CD8-positive, alpha-beta T cell (primary cell): ENCODE measurements at regions of chr12 and their contacts with region 1.

Region 1: DNA sequence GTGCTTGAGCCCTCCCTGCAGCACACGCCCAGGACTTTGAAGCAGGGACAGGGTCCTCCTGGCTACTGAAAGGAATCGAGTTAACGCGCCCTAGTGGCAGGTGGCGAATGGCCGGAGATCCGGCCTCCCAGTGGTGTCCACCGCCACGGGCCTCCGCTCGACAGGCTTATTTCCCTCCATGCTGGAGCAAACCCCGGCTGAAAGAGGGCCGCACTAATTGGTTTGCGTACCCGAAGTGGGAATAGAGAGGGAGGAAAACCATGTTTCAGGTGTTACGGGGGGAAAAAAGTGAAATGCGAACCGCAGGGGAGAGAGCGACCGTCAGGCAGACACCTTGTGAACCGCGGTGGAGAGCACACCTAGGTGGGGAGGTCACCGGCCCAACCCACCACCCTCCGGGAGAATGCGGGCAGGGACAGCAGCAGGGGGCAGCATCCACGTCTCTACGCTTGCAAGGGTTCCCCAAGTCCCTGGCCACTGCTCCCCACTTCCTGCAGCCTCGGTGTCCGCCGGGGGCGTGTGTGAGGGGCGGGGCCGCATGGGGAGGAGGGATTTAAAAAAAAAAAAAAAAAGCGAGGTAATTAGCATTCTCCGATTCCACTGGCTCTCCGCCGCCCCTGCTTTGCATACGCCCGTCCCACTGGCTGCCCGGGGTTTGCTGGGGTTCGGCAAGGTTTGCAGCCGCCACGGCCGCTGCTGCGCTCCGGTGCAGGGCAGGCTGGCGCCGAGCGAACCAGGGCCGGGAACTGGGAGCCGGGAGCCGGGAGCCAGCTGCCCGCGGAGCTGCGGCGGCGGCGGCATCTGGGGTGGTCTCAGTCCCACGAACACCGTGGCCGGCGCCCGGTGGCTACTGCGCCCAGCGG is 224.6 kb upstream of the CRY1 start:
- DNase-seq: peak; percentile 69 to 93 (median 86)
- ATAC-seq: peak; percentile 53
- H3K4me3 ChIP-seq: peak overlapping the region; percentile 69 to 74
- H3K4me3 Mint-ChIP-seq: peak overlapping the region; percentile 87
- H3K27ac ChIP-seq: peak overlapping the region; percentile 23 to 81
- H3K27ac Mint-ChIP-seq: peak overlapping the region; percentile 49
- H3K4me1 ChIP-seq: peaks cover 23% of the 10 kb centered on the region
- H3K4me1 Mint-ChIP-seq: peaks cover 36% of the 10 kb centered on the region
- H3K27me3 ChIP-seq: no peaks in the 10 kb centered on the region
- H3K27me3 Mint-ChIP-seq: no peaks in the 10 kb centered on the region
- CTCF ChIP-seq: peak; percentile 48

Region 2: DNA sequence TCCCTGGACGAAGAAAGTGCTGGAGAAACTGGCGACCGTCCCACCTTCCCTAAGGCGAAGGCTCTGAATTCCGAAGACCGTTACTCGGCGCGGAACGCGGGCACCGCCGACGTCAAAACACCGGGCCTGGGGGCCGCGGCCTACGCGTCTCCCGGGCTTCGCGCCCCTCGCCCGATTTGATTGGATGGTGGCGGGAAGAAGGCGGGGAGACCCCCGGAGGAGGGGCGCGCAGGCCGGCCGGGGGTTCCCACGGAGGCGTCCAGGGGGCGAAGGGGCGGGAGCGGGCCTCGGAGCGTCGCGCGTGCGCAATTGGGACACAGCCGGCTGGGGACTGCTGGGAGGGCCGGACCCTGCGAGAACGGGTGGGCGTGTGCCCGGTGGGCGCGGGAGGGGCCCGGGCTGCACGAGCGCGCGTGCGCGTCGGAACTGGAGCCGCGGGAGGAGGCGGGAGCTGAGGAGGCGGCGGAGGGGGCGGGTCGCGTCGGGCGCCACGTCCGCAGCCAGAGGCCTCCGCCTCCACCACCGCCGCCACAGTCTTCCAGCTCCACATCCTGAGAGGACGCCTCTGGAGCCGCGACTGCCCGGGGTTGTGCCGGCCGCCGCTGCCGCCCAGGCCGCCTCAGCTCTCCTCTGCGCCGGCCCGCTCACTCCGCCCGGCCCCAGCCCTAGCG is 362.5 kb before region 1 on chr12 and contains the start of gene TMEM263:
- CTCF ChIA-PET with region 1: no interaction called
- POLR2A ChIA-PET with region 1: interaction called, 6 read pairs
- intact Hi-C with region 1: loop called in 1 of 2 experiments (anchors 5 kb)
- DNase-seq: peak; percentile 83 to 98 (median 93)
- ATAC-seq: peak; percentile 81
- H3K4me3 ChIP-seq: peak within 1 kb of the TSS; percentile 87 to 93
- H3K4me3 Mint-ChIP-seq: peak within 1 kb of the TSS; percentile 97
- H3K27ac ChIP-seq: peak within 1 kb of the TSS; percentile 76 to 90
- H3K27ac Mint-ChIP-seq: peak within 1 kb of the TSS; percentile 96
- H3K4me1 ChIP-seq: peaks cover 18% of the 10 kb centered on the region
- H3K4me1 Mint-ChIP-seq: peaks cover 41% of the 10 kb centered on the region
- H3K27me3 ChIP-seq: no peaks in the 10 kb centered on the region
- H3K27me3 Mint-ChIP-seq: no peaks in the 10 kb centered on the region
- CTCF ChIP-seq: no peak
- total RNA-seq, gene TMEM263: 34.3 to 35.3 TPM

Region 3: DNA sequence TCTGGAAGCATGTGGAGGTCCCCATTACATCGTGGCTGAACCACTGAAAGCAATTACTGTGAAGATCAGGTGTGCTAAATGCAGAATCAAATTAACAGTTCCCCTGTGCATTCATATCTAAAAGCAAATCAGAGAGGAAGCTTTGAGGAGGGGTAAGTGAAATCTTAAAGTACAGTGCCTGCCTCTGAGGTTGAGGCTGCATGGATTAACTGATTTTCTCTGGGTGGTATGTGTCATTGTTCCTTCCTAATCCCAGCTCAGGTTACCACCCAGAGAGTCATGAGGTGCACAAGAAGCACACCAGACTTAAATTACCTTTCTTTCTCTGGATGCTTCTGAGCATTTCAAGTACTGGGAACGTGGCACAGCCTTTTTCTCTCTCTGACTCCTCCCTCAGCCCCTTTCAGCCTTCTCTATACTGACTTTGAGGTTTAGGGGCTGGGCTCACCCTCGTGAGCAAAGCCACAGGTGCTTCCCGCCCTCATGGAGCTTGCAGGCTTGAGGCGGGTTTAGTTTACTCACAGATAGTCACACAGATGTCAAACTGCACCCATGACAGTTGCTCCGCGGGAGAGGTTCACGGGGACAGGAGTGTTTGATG is 12.9 kb after region 1 on chr12:
- CTCF ChIA-PET with region 1: interaction called, 3 read pairs
- POLR2A ChIA-PET with region 1: interaction called, 10 read pairs
- intact Hi-C with region 1: no loop called
- DNase-seq: peak in 3 of 9 experiments; percentile 21 to 51 (median 27)
- ATAC-seq: peak; percentile 41
- H3K4me3 ChIP-seq: no peak overlapping the region
- H3K4me3 Mint-ChIP-seq: no peak overlapping the region
- H3K27ac ChIP-seq: no peak overlapping the region
- H3K27ac Mint-ChIP-seq: peak overlapping the region; percentile 60
- H3K4me1 ChIP-seq: peaks cover 30% of the 10 kb centered on the region
- H3K4me1 Mint-ChIP-seq: peaks cover 86% of the 10 kb centered on the region
- H3K27me3 ChIP-seq: no peaks in the 10 kb centered on the region
- H3K27me3 Mint-ChIP-seq: no peaks in the 10 kb centered on the region
- CTCF ChIP-seq: no peak

Region 4: GRCh38 chr12:107372229-107372658 is 54.3 kb after region 1 on chr12:
- CTCF ChIA-PET with region 1: interaction called, 6 read pairs
- POLR2A ChIA-PET with region 1: interaction called, 76 read pairs
- intact Hi-C with region 1: loop called (anchors 1 to 2 kb)
- DNase-seq: peak in 8 of 9 experiments; percentile 7 to 84 (median 41)
- ATAC-seq: peak; percentile 66
- H3K4me3 ChIP-seq: peak overlapping the region in 1 of 2 experiments; percentile 7
- H3K4me3 Mint-ChIP-seq: peak overlapping the region; percentile 72
- H3K27ac ChIP-seq: peak overlapping the region; percentile 43 to 62
- H3K27ac Mint-ChIP-seq: peak overlapping the region; percentile 89
- H3K4me1 ChIP-seq: peaks cover 74% of the 10 kb centered on the region
- H3K4me1 Mint-ChIP-seq: peaks cover 83% of the 10 kb centered on the region
- H3K27me3 ChIP-seq: no peaks in the 10 kb centered on the region
- H3K27me3 Mint-ChIP-seq: no peaks in the 10 kb centered on the region
- CTCF ChIP-seq: no peak

Region 5: DNA sequence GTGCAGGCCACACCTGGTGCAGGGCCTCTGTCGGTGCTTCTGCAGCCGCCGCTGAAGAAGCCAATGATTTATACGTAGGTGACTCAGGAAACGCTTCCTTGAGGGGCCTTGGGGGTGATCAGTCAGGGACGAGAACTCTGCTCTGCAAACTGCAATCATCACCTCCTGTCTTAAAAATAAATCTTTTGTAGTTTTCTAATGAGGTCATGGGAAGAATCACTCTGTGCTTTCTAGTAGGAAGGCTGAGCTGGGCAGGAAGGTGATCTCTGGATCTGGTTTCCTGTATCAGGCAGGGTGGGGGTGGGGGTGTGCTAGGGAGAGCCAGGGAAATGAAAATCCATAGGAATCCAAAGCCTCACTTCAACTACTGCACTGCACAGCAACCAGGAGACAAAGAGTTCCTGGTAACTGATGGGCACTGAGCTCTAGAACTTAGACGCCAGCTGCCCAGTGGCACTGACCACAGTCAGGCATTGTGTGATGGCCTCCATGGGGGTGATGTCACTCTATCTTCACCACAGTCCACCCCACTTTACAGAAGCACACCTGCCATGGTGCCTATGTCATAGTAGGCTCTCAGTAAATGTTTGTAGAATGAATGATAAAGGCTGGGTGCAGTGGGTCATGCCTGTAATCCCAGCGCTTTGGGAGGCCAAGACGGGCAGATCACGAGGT is 75.2 kb after region 1 on chr12:
- CTCF ChIA-PET with region 1: interaction called, 4 read pairs
- POLR2A ChIA-PET with region 1: interaction called, 18 read pairs
- intact Hi-C with region 1: no loop called
- DNase-seq: peak in 3 of 9 experiments; percentile 39 to 51 (median 50)
- ATAC-seq: peak; percentile 82
- H3K4me3 ChIP-seq: no peak overlapping the region
- H3K4me3 Mint-ChIP-seq: peak overlapping the region; percentile 62
- H3K27ac ChIP-seq: no peak overlapping the region
- H3K27ac Mint-ChIP-seq: peak overlapping the region; percentile 83
- H3K4me1 ChIP-seq: peaks cover 57% of the 10 kb centered on the region
- H3K4me1 Mint-ChIP-seq: peaks cover 89% of the 10 kb centered on the region
- H3K27me3 ChIP-seq: no peaks in the 10 kb centered on the region
- H3K27me3 Mint-ChIP-seq: no peaks in the 10 kb centered on the region
- CTCF ChIP-seq: no peak

Region 6: GRCh38 chr12:107402041-107403022 is 84.3 kb after region 1 on chr12:
- CTCF ChIA-PET with region 1: interaction called, 65 read pairs
- POLR2A ChIA-PET with region 1: interaction called, 31 read pairs
- intact Hi-C with region 1: loop called (anchors 1 to 2 kb)
- DNase-seq: peak; percentile 28 to 77 (median 62)
- ATAC-seq: peak; percentile 51
- H3K4me3 ChIP-seq: no peak overlapping the region
- H3K4me3 Mint-ChIP-seq: no peak overlapping the region
- H3K27ac ChIP-seq: no peak overlapping the region
- H3K27ac Mint-ChIP-seq: no peak overlapping the region
- H3K4me1 ChIP-seq: peaks cover 30% of the 10 kb centered on the region
- H3K4me1 Mint-ChIP-seq: peaks cover 40% of the 10 kb centered on the region
- H3K27me3 ChIP-seq: no peaks in the 10 kb centered on the region
- H3K27me3 Mint-ChIP-seq: no peaks in the 10 kb centered on the region
- CTCF ChIP-seq: peak; percentile 71

Region 7: GRCh38 chr12:107607464-107608392 is 289.7 kb after region 1 on chr12:
- CTCF ChIA-PET with region 1: interaction called, 6 read pairs
- POLR2A ChIA-PET with region 1: no interaction called
- intact Hi-C with region 1: loop called (anchors 1 to 2 kb)
- DNase-seq: peak; percentile 57 to 89 (median 83)
- ATAC-seq: peak; percentile 84
- H3K4me3 ChIP-seq: no peak overlapping the region
- H3K4me3 Mint-ChIP-seq: no peak overlapping the region
- H3K27ac ChIP-seq: no peak overlapping the region
- H3K27ac Mint-ChIP-seq: no peak overlapping the region
- H3K4me1 ChIP-seq: no peaks in the 10 kb centered on the region
- H3K4me1 Mint-ChIP-seq: no peaks in the 10 kb centered on the region
- H3K27me3 ChIP-seq: no peaks in the 10 kb centered on the region
- H3K27me3 Mint-ChIP-seq: no peaks in the 10 kb centered on the region
- CTCF ChIP-seq: peak; percentile 94